Naive thymus-derived CD8-positive, alpha-beta T cell (primary cell): ENCODE measurements at regions of chr6 and their contacts with region 1.

Region 1: DNA sequence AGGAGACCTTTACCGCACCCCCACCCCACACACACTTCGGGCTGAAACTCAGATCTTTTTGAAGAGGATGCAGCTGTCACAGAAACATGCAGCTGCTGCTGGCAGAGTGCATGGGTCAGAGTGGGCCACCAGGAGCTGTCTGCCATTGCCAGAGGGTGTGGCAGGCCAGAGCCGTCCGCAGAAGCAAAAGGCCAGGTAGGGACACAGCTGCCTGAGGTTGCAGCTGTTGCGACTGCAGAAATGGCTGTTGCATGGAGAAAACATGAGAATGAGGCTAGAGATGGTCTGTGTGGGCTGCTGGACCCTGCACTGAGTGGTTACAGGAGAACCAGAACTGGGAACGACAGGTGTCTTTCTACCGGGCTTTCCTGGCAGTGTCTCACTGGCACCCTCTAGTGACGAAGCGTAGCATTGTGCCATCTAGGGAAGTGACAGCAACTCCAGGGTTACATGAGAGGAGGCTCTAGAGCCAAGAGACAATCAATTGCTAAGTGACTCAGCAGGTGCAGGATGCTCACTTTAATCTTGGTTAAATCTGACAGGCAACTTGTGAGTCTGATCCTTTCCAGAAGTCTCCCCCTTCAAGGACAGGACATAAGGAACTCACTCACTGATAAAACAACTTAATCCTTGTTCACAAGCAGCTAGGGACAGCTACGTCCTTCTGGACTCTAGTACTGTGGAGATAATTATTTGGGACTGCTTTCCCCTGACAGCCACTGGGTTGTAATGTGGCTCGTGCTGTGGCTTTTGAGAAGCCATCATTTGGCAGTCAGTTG is 29.1 kb upstream of the SERPINB9 start:
- DNase-seq: peak; percentile 61 to 91 (median 84)
- ATAC-seq: peak; percentile 77
- H3K4me3 Mint-ChIP-seq: peak overlapping the region; percentile 40 to 68 (median 51)
- H3K27ac Mint-ChIP-seq: peak overlapping the region in 9 of 10 donors; percentile 1 to 78 (median 56)
- H3K4me1 Mint-ChIP-seq: peaks cover 16 to 32% (median 24%) of the 10 kb centered on the region in 4 donors
- H3K27me3 Mint-ChIP-seq: no peaks in the 10 kb centered on the region

Region 2: DNA sequence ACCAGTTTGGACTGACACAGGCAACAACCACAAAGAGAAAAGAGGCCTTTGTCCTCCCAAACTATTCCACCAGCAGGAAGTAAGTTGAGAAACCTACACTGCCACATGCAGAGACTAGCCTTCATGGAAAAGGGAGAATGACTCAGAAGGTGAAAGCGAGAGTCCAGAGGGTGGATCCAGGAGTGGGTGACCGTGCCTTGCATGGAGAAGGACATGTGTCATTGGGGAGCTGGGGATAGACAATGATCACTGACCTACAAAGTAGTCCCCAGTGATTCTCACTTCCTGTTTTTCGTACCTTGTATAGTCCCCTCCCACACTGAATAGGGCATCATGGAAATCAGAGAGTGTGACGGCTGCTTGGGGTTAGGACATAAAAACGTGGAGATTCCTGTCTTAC is 273.4 kb before region 1 on chr6:
- POLR2A ChIA-PET with region 1: no interaction called
- DNase-seq: no peak
- ATAC-seq: no peak
- H3K4me3 Mint-ChIP-seq: no peak overlapping the region
- H3K27ac Mint-ChIP-seq: no peak overlapping the region
- H3K4me1 Mint-ChIP-seq: peaks cover 0 to 5% (median under 1%) of the 10 kb centered on the region in 4 donors
- H3K27me3 Mint-ChIP-seq: no peaks in the 10 kb centered on the region

Region 3: GRCh38 chr6:2848851-2849250 is 83.3 kb before region 1 on chr6:
- POLR2A ChIA-PET with region 1: interaction called, 36 read pairs
- DNase-seq: peak; percentile 36 to 88 (median 68)
- ATAC-seq: peak; percentile 87 to 97
- H3K4me3 Mint-ChIP-seq: peak overlapping the region in 9 of 10 donors; percentile 16 to 77 (median 69)
- H3K27ac Mint-ChIP-seq: peak overlapping the region; percentile 61 to 98 (median 95)
- H3K4me1 Mint-ChIP-seq: peaks cover 20 to 52% (median 44%) of the 10 kb centered on the region in 4 donors
- H3K27me3 Mint-ChIP-seq: no peaks in the 10 kb centered on the region

Region 4: GRCh38 chr6:2853761-2854395 is 78.3 kb before region 1 on chr6:
- POLR2A ChIA-PET with region 1: interaction called, 36 read pairs
- DNase-seq: peak in 7 of 10 donors; percentile 34 to 50 (median 39)
- ATAC-seq: peak; percentile 6 to 13
- H3K4me3 Mint-ChIP-seq: peak overlapping the region; percentile 55 to 86 (median 77)
- H3K27ac Mint-ChIP-seq: peak overlapping the region; percentile 85 to 100 (median 94)
- H3K4me1 Mint-ChIP-seq: peaks cover 37 to 74% (median 69%) of the 10 kb centered on the region in 4 donors
- H3K27me3 Mint-ChIP-seq: peaks cover 0 to 2% (median 0%) of the 10 kb centered on the region in 5 donors

Region 5: DNA sequence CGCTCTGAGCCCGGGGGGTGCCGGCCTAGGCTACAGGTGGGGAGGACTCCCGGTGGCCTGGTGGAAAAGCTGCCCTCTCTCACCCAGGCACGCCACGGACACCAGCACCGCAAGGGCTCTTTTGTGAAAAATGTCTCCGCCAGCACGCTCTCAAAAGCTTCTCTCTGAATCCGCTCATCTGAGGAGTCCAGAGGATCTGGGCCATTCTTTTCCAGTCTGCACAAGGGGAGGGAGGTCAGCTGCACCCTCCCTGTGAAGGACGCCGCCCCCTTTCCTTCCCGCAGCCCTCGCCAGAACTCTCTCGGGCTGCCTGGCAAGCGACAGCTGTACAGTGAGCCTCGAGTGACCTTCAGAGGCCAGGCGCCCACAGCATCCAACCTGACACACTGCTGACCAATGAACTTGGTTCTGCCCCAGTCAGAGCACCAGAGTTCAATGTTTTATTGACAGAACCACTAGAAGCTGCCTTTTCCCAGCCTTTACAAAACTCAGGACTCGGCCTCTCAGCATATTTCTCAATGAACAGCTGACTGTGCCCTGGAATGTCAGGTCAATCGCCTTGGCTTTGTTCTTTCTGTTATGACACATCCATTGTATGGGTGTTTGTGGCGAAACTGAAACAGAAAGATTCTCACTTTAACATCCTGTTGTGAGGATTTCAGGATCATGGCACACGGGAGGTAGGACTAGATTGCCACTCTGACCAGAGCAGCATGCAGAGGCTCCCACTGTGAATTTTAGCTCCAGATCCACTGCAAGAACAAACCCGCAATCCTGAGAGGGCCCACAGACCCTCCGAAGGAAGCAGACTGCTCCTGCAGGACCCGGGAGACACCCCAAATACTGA is 55.7 kb before region 1 on chr6:
- POLR2A ChIA-PET with region 1: interaction called, 20 read pairs
- DNase-seq: no peak
- ATAC-seq: peak; percentile 15 to 24
- H3K4me3 Mint-ChIP-seq: peak overlapping the region; percentile 72 to 94 (median 89)
- H3K27ac Mint-ChIP-seq: peak overlapping the region; percentile 91 to 99 (median 96)
- H3K4me1 Mint-ChIP-seq: peaks cover 44 to 88% (median 81%) of the 10 kb centered on the region in 4 donors
- H3K27me3 Mint-ChIP-seq: no peaks in the 10 kb centered on the region

Region 6: DNA sequence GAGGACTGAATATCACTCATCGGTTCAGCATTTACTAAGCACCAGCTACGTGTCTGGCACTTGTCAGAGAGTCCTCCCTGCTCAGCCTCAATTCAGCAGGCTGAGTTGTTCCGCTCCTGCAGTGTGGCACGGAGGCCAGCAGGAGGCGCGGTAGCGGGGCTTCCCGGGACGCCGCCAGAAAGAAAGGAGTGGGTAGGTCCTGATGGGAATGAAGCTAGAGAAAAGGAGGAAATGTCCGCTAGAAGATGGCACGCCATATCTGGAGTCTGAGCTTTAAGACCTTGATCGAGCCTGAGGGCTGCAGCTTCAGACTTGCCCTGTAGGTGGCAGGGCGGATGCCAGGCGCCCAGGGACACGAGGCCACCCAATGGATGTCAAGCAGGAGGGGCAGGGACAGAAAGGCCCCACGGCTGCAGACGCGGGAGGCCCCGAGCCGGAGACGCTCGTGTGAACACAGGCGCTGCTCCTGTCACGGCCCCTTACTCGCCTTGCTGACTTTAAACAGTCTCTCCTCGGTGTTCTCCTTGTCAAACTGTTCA is 20.5 kb after region 1 on chr6:
- POLR2A ChIA-PET with region 1: interaction called, 147 read pairs
- DNase-seq: peak in 5 of 10 donors; percentile 30 to 63 (median 43)
- ATAC-seq: peak; percentile 67 to 94
- H3K4me3 Mint-ChIP-seq: peak overlapping the region in 5 of 10 donors; percentile 10 to 62 (median 46)
- H3K27ac Mint-ChIP-seq: peak overlapping the region in 6 of 10 donors; percentile 3 to 85 (median 40)
- H3K4me1 Mint-ChIP-seq: peaks cover 9 to 33% (median 17%) of the 10 kb centered on the region in 4 donors
- H3K27me3 Mint-ChIP-seq: no peaks in the 10 kb centered on the region

Region 7: GRCh38 chr6:2971420-2972218 is 39.5 kb after region 1 on chr6 and contains the start of gene SERPINB6:
- POLR2A ChIA-PET with region 1: interaction called, 41 read pairs
- DNase-seq: peak; percentile 17 to 75 (median 40)
- ATAC-seq: peak; percentile 69 to 74
- H3K4me3 Mint-ChIP-seq: peak within 1 kb of the TSS; percentile 84 to 94 (median 92)
- H3K27ac Mint-ChIP-seq: peak within 1 kb of the TSS; percentile 87 to 97 (median 94)
- H3K4me1 Mint-ChIP-seq: peaks cover 24 to 60% (median 43%) of the 10 kb centered on the region in 4 donors
- H3K27me3 Mint-ChIP-seq: peaks cover 0 to 10% (median 0%) of the 10 kb centered on the region in 5 donors
- polyA plus RNA-seq, gene SERPINB6: 128 to 152 (median 141) TPM

Region 8: DNA sequence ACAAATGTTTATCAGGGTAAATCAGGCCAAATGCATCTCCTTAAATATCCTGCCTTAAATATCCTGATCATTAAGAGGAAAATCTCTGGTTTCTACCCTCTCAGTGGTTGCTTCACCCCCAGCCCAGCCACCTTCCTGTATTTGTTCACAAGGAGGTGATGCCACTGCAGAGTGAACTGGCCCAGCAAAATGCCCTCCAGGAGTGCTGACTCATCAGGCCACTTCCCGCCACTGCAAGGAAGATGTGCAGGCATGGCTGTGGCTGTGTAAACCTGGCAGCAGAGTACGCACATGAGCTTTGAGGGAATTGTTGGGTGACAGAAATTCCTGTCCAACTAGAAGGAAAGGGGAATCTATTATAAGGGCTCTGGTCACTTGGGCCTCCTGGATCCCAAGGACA is 81.3 kb after region 1 on chr6:
- POLR2A ChIA-PET with region 1: no interaction called
- DNase-seq: no peak
- ATAC-seq: no peak
- H3K4me3 Mint-ChIP-seq: no peak overlapping the region
- H3K27ac Mint-ChIP-seq: no peak overlapping the region
- H3K4me1 Mint-ChIP-seq: peaks cover 0 to 4% (median 2%) of the 10 kb centered on the region in 4 donors
- H3K27me3 Mint-ChIP-seq: no peaks in the 10 kb centered on the region